HepG2 (cell line): ENCODE measurements at regions of chr6 and their contacts with region 1.

Region 1: DNA sequence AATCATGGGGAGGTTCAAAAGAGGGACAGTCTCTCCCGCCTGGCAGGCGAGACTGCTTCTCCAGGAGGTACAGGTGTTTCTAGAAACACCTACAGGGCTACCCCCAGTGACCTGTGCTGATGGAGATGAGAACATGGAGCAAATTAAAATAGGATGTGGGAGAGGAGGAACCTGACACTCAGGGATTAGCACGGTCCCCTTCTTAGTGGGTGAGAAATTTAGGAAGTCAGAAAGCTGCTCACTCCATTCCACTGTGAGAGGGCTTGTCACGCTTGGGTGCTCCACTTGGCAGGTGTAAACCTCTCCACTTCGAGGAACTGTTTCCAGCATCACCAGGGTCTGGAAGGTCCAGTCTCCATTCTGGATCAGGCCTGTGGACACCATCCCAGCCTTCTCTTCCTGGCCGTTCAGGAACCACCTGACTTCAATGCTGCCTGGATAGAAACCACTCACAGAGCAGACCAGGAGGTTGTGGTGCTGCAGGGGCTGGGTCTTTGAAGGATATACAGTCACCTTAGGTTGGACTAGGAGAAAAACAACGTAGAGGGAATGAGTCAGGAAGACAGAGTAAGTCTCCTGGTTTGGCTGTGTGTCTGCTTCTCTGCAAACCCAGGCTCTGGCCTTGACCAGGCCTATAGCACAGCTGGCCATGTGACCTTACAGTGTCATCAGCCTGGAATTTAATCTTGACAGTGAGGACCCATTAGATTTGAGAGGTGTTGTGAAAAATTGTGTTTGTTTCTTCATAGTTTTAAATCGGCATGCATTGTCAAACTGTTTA is 8.1 kb downstream of the HLA-DRB1 start:
- DNase-seq: no peak
- ATAC-seq: no peak
- H3K4me3 ChIP-seq: no peak overlapping the region
- H3K27ac ChIP-seq: no peak overlapping the region
- H3K4me1 ChIP-seq: no peaks in the 10 kb centered on the region
- H3K27me3 ChIP-seq: peaks cover 0 to 9% of the 10 kb centered on the region in 2 experiments; a peak in 1 of 5 replicates
- CTCF ChIP-seq: no peak
- EP300 ChIP-seq: no peak
- POLR2A ChIP-seq: no peak
- RAD21 ChIP-seq: no peak

Region 2: GRCh38 chr6:32558426-32559057 is 23.0 kb before region 1 on chr6:
- CTCF ChIA-PET with region 1: no interaction called
- POLR2A ChIA-PET with region 1: no interaction called
- in situ Hi-C with region 1: no loop called
- intact Hi-C with region 1: loop called (anchors 1 kb)
- DNase-seq: no peak
- ATAC-seq: no peak
- H3K4me3 ChIP-seq: no peak overlapping the region
- H3K27ac ChIP-seq: no peak overlapping the region
- H3K4me1 ChIP-seq: 0 out of 2 replicates have a peak, but pooled peaks cover 6% of the 10 kb centered on the region
- H3K27me3 ChIP-seq: peaks cover 0 to 6% of the 10 kb centered on the region in 2 experiments; a peak in 1 of 5 replicates
- CTCF ChIP-seq: no peak
- EP300 ChIP-seq: no peak
- POLR2A ChIP-seq: no peak
- RAD21 ChIP-seq: no peak

Region 3: GRCh38 chr6:32703347-32703746 is 121.8 kb after region 1 on chr6:
- CTCF ChIA-PET with region 1: no interaction called
- POLR2A ChIA-PET with region 1: no interaction called
- in situ Hi-C with region 1: no loop called
- intact Hi-C with region 1: no loop called
- DNase-seq: no peak
- ATAC-seq: no peak
- H3K4me3 ChIP-seq: no peak overlapping the region
- H3K27ac ChIP-seq: no peak overlapping the region
- H3K4me1 ChIP-seq: no peaks in the 10 kb centered on the region
- H3K27me3 ChIP-seq: peaks cover 0 to 10% of the 10 kb centered on the region in 2 experiments; a peak in 2 of 5 replicates
- CTCF ChIP-seq: no peak
- EP300 ChIP-seq: no peak
- POLR2A ChIP-seq: no peak
- RAD21 ChIP-seq: no peak